Endothelial cell of umbilical vein (primary cell): ENCODE measurements at regions of chr3 and their contacts with region 1.

Region 1: GRCh38 chr3:114299421-114299820 is 5.6 kb downstream of the TIGIT start:
- DNase-seq: peak; percentile 39
- H3K4me3 ChIP-seq: no peak overlapping the region
- H3K27ac ChIP-seq: no peak overlapping the region
- H3K4me1 ChIP-seq: no peaks in the 10 kb centered on the region
- H3K27me3 ChIP-seq: peaks cover 8% of the 10 kb centered on the region in 2 experiments
- CTCF ChIP-seq: peak; percentile 42 to 67
- POLR2A ChIP-seq: no peak

Region 2: GRCh38 chr3:114285648-114286230 is 13.7 kb before region 1 on chr3:
- CTCF ChIA-PET with region 1: interaction called, 28 read pairs
- POLR2A ChIA-PET with region 1: no interaction called
- dilution Hi-C with region 1: no loop called
- intact Hi-C with region 1: no loop called
- DNase-seq: no peak
- H3K4me3 ChIP-seq: no peak overlapping the region
- H3K27ac ChIP-seq: no peak overlapping the region
- H3K4me1 ChIP-seq: no peaks in the 10 kb centered on the region
- H3K27me3 ChIP-seq: no peaks in the 10 kb centered on the region
- CTCF ChIP-seq: no peak
- POLR2A ChIP-seq: no peak

Region 3: GRCh38 chr3:114319453-114319852 is 20.0 kb after region 1 on chr3:
- CTCF ChIA-PET with region 1: interaction called, 11 read pairs
- POLR2A ChIA-PET with region 1: no interaction called
- dilution Hi-C with region 1: no loop called
- intact Hi-C with region 1: no loop called
- DNase-seq: peak; percentile 13
- H3K4me3 ChIP-seq: no peak overlapping the region
- H3K27ac ChIP-seq: no peak overlapping the region
- H3K4me1 ChIP-seq: peaks cover 12% of the 10 kb centered on the region
- H3K27me3 ChIP-seq: no peaks in the 10 kb centered on the region
- CTCF ChIP-seq: no peak
- POLR2A ChIP-seq: no peak